B cell (primary cell): ENCODE measurements at regions of chr16 and their contacts with region 1.

Region 1: GRCh38 chr16:67672739-67673662 is 6.4 kb downstream of the C16orf86 start:
- DNase-seq: peak; percentile 77
- ATAC-seq: peak; percentile 23
- H3K4me3 ChIP-seq: no peak overlapping the region
- H3K4me3 Mint-ChIP-seq: no peak overlapping the region
- H3K27ac ChIP-seq: no peak overlapping the region
- H3K27ac Mint-ChIP-seq: peak overlapping the region; percentile 41
- H3K4me1 ChIP-seq: peaks cover 23 to 37% of the 10 kb centered on the region in 2 donors
- H3K4me1 Mint-ChIP-seq: peaks cover 39% of the 10 kb centered on the region
- H3K27me3 ChIP-seq: no peaks in the 10 kb centered on the region
- H3K27me3 Mint-ChIP-seq: no peaks in the 10 kb centered on the region
- CTCF ChIP-seq: peak; percentile 81

Region 2: DNA sequence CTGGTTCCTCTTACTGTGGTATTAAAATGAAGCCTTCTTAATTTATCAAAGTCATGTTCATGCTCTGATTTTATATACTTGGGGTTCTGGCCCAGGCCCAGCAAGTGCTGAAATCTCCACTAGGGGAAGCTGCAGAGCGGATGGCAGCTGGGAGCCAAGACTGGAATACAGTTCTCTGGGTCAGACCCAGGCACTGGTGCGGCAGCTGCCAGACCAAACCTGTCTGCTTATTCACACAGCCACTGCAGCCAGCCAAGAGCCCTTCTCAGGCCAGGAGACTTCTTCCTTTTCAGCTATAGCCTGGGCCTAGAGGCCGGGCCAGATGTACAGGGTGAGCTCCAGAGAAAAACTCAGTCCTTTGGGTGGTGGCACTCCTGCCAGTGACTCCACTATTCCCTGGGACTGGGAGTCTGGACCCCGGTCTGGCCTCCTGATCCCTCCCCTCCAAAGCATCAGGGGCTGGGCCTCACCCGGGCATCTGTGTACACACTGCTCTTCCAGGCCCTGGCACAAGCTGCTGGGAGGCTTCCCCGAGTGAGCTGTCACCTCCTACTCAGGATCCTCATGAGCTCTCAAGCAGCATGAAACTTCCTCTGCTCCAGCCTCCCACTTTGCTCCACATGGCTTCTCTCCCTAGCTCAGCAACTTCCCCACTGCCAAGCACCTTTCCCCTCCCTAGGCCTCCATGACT is 216.5 kb before region 1 on chr16:
- CTCF ChIA-PET with region 1: no interaction called
- POLR2A ChIA-PET with region 1: no interaction called
- intact Hi-C with region 1: no loop called
- DNase-seq: no peak
- ATAC-seq: no peak
- H3K4me3 ChIP-seq: no peak overlapping the region
- H3K4me3 Mint-ChIP-seq: no peak overlapping the region
- H3K27ac ChIP-seq: no peak overlapping the region
- H3K27ac Mint-ChIP-seq: no peak overlapping the region
- H3K4me1 ChIP-seq: peaks cover 0 to 10% of the 10 kb centered on the region in 2 donors
- H3K4me1 Mint-ChIP-seq: peaks cover 16% of the 10 kb centered on the region
- H3K27me3 ChIP-seq: no peaks in the 10 kb centered on the region
- H3K27me3 Mint-ChIP-seq: no peaks in the 10 kb centered on the region
- CTCF ChIP-seq: no peak

Region 3: GRCh38 chr16:67685388-67686112 is 12.5 kb after region 1 on chr16:
- CTCF ChIA-PET with region 1: interaction called, 10 read pairs
- POLR2A ChIA-PET with region 1: interaction called, 5 read pairs
- intact Hi-C with region 1: no loop called
- DNase-seq: peak; percentile 66
- ATAC-seq: peak; percentile 86
- H3K4me3 ChIP-seq: peak overlapping the region in 1 of 5 experiments; percentile 19
- H3K4me3 Mint-ChIP-seq: peak overlapping the region; percentile 65
- H3K27ac ChIP-seq: no peak overlapping the region
- H3K27ac Mint-ChIP-seq: peak overlapping the region; percentile 83
- H3K4me1 ChIP-seq: peaks cover 18 to 26% of the 10 kb centered on the region in 2 donors
- H3K4me1 Mint-ChIP-seq: peaks cover 24% of the 10 kb centered on the region
- H3K27me3 ChIP-seq: no peaks in the 10 kb centered on the region
- H3K27me3 Mint-ChIP-seq: no peaks in the 10 kb centered on the region
- CTCF ChIP-seq: no peak

Region 4: DNA sequence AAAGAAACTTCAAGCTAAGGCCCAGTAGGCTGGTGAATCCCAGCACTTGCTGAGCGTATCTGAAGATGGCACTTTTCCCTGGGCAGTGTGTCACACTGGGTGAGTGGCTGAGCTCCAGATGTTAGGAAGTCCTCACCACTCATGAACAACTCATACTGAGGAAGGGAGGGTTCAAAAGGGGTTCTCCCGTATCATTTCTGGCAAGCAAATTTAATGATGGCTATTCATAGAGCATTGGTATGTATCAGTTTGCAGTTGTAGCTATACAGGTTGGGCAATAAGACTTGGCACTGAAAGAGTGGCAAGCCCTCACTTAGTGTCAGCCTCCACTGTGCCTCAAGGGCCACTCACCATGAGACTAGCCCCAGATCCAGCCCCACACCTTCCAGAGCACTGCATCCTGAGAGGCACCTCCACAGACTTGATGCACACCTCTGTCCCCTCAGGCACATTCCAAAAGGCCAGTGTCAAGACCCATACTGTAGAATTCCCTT is 35.4 kb after region 1 on chr16:
- CTCF ChIA-PET with region 1: no interaction called
- POLR2A ChIA-PET with region 1: no interaction called
- intact Hi-C with region 1: no loop called
- DNase-seq: no peak
- ATAC-seq: no peak
- H3K4me3 ChIP-seq: no peak overlapping the region
- H3K4me3 Mint-ChIP-seq: no peak overlapping the region
- H3K27ac ChIP-seq: no peak overlapping the region
- H3K27ac Mint-ChIP-seq: no peak overlapping the region
- H3K4me1 ChIP-seq: no peaks in the 10 kb centered on the region
- H3K4me1 Mint-ChIP-seq: peaks cover 6% of the 10 kb centered on the region
- H3K27me3 ChIP-seq: no peaks in the 10 kb centered on the region
- H3K27me3 Mint-ChIP-seq: no peaks in the 10 kb centered on the region
- CTCF ChIP-seq: no peak

Region 5: GRCh38 chr16:67719048-67719777 is 46.2 kb after region 1 on chr16 and contains the start of gene GFOD2:
- CTCF ChIA-PET with region 1: interaction called, 12 read pairs
- POLR2A ChIA-PET with region 1: interaction called, 4 read pairs
- intact Hi-C with region 1: loop called (anchors 2 kb)
- DNase-seq: peak; percentile 97
- ATAC-seq: peak; percentile 94
- H3K4me3 ChIP-seq: peak within 1 kb of the TSS; percentile 66 to 93 (median 87)
- H3K4me3 Mint-ChIP-seq: peak within 1 kb of the TSS; percentile 99
- H3K27ac ChIP-seq: peak within 1 kb of the TSS; percentile 89 to 93
- H3K27ac Mint-ChIP-seq: peak within 1 kb of the TSS; percentile 98
- H3K4me1 ChIP-seq: peaks cover 18 to 20% of the 10 kb centered on the region in 2 donors
- H3K4me1 Mint-ChIP-seq: peaks cover 38% of the 10 kb centered on the region
- H3K27me3 ChIP-seq: no peaks in the 10 kb centered on the region
- H3K27me3 Mint-ChIP-seq: no peaks in the 10 kb centered on the region
- CTCF ChIP-seq: no peak
- total RNA-seq, gene GFOD2: 18.1 and 18.2 TPM in 2 replicates

Region 6: DNA sequence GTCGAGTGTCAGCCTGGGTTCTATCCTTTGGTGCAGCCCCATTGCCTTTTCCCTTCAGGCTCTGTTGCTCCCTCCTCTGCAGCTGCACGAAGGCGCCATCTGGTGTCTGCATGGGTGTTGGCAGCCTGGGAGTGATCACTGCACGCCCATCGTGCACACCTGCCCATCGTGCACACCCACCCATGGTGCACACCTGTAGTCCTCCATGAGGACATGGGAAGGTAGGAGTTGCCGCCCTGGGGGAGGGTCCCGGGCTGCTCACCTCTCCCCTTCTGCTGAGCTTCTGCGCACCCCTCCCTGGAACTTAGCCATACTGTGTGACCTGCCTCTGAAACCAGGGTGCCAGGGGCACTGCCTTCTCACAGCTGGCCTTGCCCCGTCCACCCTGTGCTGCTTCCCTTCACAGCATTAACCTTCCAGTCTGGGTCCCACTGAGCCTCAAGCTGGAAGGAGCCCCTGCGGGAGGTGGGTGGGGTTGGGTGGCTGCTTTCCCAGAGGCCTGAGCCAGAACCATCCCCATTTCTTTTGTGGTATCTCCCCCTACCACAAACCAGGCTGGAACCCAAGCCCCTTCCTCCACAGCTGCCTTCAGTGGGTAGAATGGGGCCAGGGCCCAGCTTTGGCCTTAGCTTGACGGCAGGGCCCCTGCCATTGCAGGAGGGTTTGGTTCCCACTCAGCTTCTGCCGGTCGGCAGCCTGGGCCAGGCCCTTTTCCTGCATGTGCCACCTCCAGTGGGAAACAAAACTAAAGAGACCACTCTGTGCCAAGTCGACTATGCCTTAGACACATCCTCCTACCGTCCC is 255.8 kb after region 1 on chr16:
- CTCF ChIA-PET with region 1: interaction called, 17 read pairs
- POLR2A ChIA-PET with region 1: interaction called, 3 read pairs
- intact Hi-C with region 1: no loop called
- DNase-seq: peak; percentile 79
- ATAC-seq: peak; percentile 82
- H3K4me3 ChIP-seq: no peak overlapping the region
- H3K4me3 Mint-ChIP-seq: no peak overlapping the region
- H3K27ac ChIP-seq: no peak overlapping the region
- H3K27ac Mint-ChIP-seq: peak overlapping the region; percentile 50
- H3K4me1 ChIP-seq: peaks cover 9 to 27% of the 10 kb centered on the region in 2 donors
- H3K4me1 Mint-ChIP-seq: peaks cover 26% of the 10 kb centered on the region
- H3K27me3 ChIP-seq: no peaks in the 10 kb centered on the region
- H3K27me3 Mint-ChIP-seq: no peaks in the 10 kb centered on the region
- CTCF ChIP-seq: peak; percentile 77

Region 7: GRCh38 chr16:68022278-68022703 is 349.3 kb after region 1 on chr16:
- CTCF ChIA-PET with region 1: no interaction called
- POLR2A ChIA-PET with region 1: no interaction called
- intact Hi-C with region 1: no loop called
- DNase-seq: no peak
- ATAC-seq: no peak
- H3K4me3 ChIP-seq: peak overlapping the region; percentile 74 to 98 (median 90)
- H3K4me3 Mint-ChIP-seq: peak overlapping the region; percentile 96
- H3K27ac ChIP-seq: peak overlapping the region; percentile 72 to 79
- H3K27ac Mint-ChIP-seq: peak overlapping the region; percentile 99
- H3K4me1 ChIP-seq: peaks cover 23 to 26% of the 10 kb centered on the region in 2 donors
- H3K4me1 Mint-ChIP-seq: peaks cover 27% of the 10 kb centered on the region
- H3K27me3 ChIP-seq: no peaks in the 10 kb centered on the region
- H3K27me3 Mint-ChIP-seq: no peaks in the 10 kb centered on the region
- CTCF ChIP-seq: no peak

Region 8: GRCh38 chr16:68064791-68065365 is 391.9 kb after region 1 on chr16:
- CTCF ChIA-PET with region 1: interaction called, 5 read pairs
- POLR2A ChIA-PET with region 1: no interaction called
- intact Hi-C with region 1: loop called (anchors 1 kb)
- DNase-seq: peak; percentile 74
- ATAC-seq: peak; percentile 93
- H3K4me3 ChIP-seq: no peak overlapping the region
- H3K4me3 Mint-ChIP-seq: no peak overlapping the region
- H3K27ac ChIP-seq: no peak overlapping the region
- H3K27ac Mint-ChIP-seq: peak overlapping the region; percentile 33
- H3K4me1 ChIP-seq: peaks cover 9 to 22% of the 10 kb centered on the region in 2 donors
- H3K4me1 Mint-ChIP-seq: peaks cover 23% of the 10 kb centered on the region
- H3K27me3 ChIP-seq: no peaks in the 10 kb centered on the region
- H3K27me3 Mint-ChIP-seq: no peaks in the 10 kb centered on the region
- CTCF ChIP-seq: peak; percentile 90